GM12878 (cell line): ENCODE measurements at regions of chr7 and their contacts with region 1.

Region 1: GRCh38 chr7:137890449-137890921 is 43.7 kb upstream of the DGKI start:
- DNase-seq: no peak
- ATAC-seq: peak; percentile 4
- H3K4me3 ChIP-seq: no peak overlapping the region
- H3K27ac ChIP-seq: no peak overlapping the region
- H3K4me1 ChIP-seq: peaks cover 26% of the 10 kb centered on the region
- H3K27me3 ChIP-seq: no peaks in the 10 kb centered on the region
- CTCF ChIP-seq: no peak
- EP300 ChIP-seq: no peak
- POLR2A ChIP-seq: no peak
- RAD21 ChIP-seq: no peak

Region 2: GRCh38 chr7:137846827-137847567 is 43.5 kb before region 1 on chr7 and contains the start of gene DGKI:
- CTCF ChIA-PET with region 1: interaction called, 4 read pairs
- POLR2A ChIA-PET with region 1: interaction called, 3 read pairs
- RAD21 ChIA-PET with region 1: interaction called, 5 read pairs
- SMC1A ChIA-PET with region 1: interaction called, 10 read pairs
- in situ Hi-C with region 1: no loop called
- intact Hi-C with region 1: loop called (anchors 2 kb)
- DNase-seq: no peak
- ATAC-seq: peak; percentile 67
- H3K4me3 ChIP-seq: peak within 1 kb of the TSS; percentile 17; the same call in 1 of the 2 replicates
- H3K27ac ChIP-seq: no peak within 1 kb of the TSS
- H3K4me1 ChIP-seq: no peaks in the 10 kb centered on the region
- H3K27me3 ChIP-seq: peaks cover 1 to 14% of the 10 kb centered on the region in 2 experiments; a peak in 2 of 4 replicates
- CTCF ChIP-seq: no peak
- EP300 ChIP-seq: no peak
- POLR2A ChIP-seq: peak; percentile 51
- RAD21 ChIP-seq: no peak
- polyA plus RNA-seq, gene DGKI: 28.3 to 37.1 TPM

Region 3: DNA sequence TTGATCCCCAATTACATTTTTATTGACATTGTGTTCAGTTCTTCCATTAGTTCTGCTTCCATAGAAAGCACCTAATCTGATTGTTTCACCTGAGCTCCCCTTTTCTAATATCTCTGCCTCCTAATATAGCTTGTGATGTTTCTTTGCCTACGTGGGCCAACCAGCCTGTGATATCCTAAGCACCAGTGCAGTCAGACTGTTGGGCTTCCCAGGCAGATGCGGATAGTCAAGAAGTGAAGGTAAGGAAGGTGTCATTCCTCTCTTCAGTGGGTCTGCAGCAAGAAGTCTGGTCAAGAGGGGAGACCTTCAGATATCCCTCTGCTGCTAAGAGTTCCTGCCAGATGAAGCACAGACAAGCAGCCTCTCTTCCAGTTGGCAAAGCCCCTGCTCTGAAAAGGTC is 27.5 kb before region 1 on chr7:
- CTCF ChIA-PET with region 1: no interaction called
- POLR2A ChIA-PET with region 1: no interaction called
- RAD21 ChIA-PET with region 1: no interaction called
- SMC1A ChIA-PET with region 1: interaction called, 10 read pairs
- in situ Hi-C with region 1: no loop called
- intact Hi-C with region 1: no loop called
- DNase-seq: no peak
- ATAC-seq: no peak
- H3K4me3 ChIP-seq: no peak overlapping the region
- H3K27ac ChIP-seq: no peak overlapping the region
- H3K4me1 ChIP-seq: no peaks in the 10 kb centered on the region
- H3K27me3 ChIP-seq: no peaks in the 10 kb centered on the region
- CTCF ChIP-seq: no peak
- EP300 ChIP-seq: no peak
- POLR2A ChIP-seq: 0 out of 2 replicates have a peak, but pooled peaks have one; percentile 29
- RAD21 ChIP-seq: no peak

Region 4: DNA sequence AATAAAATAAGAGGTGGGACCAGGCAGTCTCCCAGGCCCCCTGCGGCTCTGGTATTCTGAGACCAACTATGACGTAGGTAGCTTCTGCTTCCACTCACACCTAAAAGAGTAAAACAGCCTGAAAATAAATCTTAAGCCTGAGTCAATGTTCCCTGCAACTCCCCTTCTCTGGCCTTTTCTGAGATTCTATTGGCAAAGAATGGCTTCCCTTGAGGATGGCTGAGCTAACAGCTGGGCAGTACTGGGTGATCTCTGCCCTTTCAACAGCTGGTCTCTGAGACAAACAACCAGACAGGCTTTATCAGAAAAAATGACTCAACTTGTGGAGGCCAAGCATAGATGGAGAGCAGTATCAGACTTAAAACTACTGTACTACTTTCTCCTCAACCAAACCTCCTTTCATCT is 52.7 kb after region 1 on chr7:
- CTCF ChIA-PET with region 1: no interaction called
- POLR2A ChIA-PET with region 1: no interaction called
- RAD21 ChIA-PET with region 1: no interaction called
- SMC1A ChIA-PET with region 1: no interaction called
- in situ Hi-C with region 1: no loop called
- intact Hi-C with region 1: no loop called
- DNase-seq: no peak
- ATAC-seq: no peak
- H3K4me3 ChIP-seq: no peak overlapping the region
- H3K27ac ChIP-seq: no peak overlapping the region
- H3K4me1 ChIP-seq: no peaks in the 10 kb centered on the region; the same call in 1 of the 2 replicates
- H3K27me3 ChIP-seq: no peaks in the 10 kb centered on the region
- CTCF ChIP-seq: no peak
- EP300 ChIP-seq: no peak
- POLR2A ChIP-seq: no peak
- RAD21 ChIP-seq: no peak

Region 5: GRCh38 chr7:137953665-137954470 is 63.4 kb after region 1 on chr7:
- CTCF ChIA-PET with region 1: no interaction called
- POLR2A ChIA-PET with region 1: no interaction called
- RAD21 ChIA-PET with region 1: no interaction called
- SMC1A ChIA-PET with region 1: no interaction called
- in situ Hi-C with region 1: no loop called
- intact Hi-C with region 1: no loop called
- DNase-seq: no peak
- ATAC-seq: peak; percentile 31; the same call in 2 of the 3 replicates
- H3K4me3 ChIP-seq: no peak overlapping the region
- H3K27ac ChIP-seq: no peak overlapping the region; the same call in 1 of the 2 replicates
- H3K4me1 ChIP-seq: peaks cover 14% of the 10 kb centered on the region
- H3K27me3 ChIP-seq: no peaks in the 10 kb centered on the region
- CTCF ChIP-seq: no peak
- EP300 ChIP-seq: no peak
- POLR2A ChIP-seq: no peak
- RAD21 ChIP-seq: no peak

Region 6: GRCh38 chr7:138089080-138089991 is 198.9 kb after region 1 on chr7:
- CTCF ChIA-PET with region 1: no interaction called
- POLR2A ChIA-PET with region 1: no interaction called
- RAD21 ChIA-PET with region 1: no interaction called
- SMC1A ChIA-PET with region 1: no interaction called
- in situ Hi-C with region 1: no loop called
- intact Hi-C with region 1: no loop called
- DNase-seq: no peak
- ATAC-seq: no peak
- H3K4me3 ChIP-seq: no peak overlapping the region
- H3K27ac ChIP-seq: no peak overlapping the region
- H3K4me1 ChIP-seq: peaks cover 6% of the 10 kb centered on the region
- H3K27me3 ChIP-seq: no peaks in the 10 kb centered on the region
- CTCF ChIP-seq: no peak
- EP300 ChIP-seq: no peak
- POLR2A ChIP-seq: no peak
- RAD21 ChIP-seq: no peak

Region 7: DNA sequence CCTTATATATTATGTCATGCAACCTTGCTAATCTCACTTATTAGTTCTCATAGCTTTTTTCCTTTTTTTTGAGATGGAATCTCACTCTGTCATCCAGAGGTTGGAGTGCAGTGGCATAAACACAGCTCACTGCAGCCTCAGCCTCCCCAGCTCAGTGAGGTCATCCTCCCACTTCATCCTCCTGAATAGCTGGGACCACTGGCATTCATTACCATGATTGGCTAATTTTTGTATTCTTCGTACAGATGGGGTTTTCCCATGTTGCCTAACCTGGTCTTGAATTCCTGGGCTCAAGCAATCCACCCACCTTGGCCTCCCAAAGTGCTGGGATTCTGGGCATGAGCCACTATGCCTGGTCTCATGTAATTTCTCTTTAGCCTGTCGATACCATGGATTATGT is 480.5 kb after region 1 on chr7:
- CTCF ChIA-PET with region 1: no interaction called
- POLR2A ChIA-PET with region 1: no interaction called
- RAD21 ChIA-PET with region 1: no interaction called
- SMC1A ChIA-PET with region 1: no interaction called
- in situ Hi-C with region 1: no loop called
- intact Hi-C with region 1: no loop called
- DNase-seq: no peak
- ATAC-seq: no peak
- H3K4me3 ChIP-seq: no peak overlapping the region
- H3K27ac ChIP-seq: no peak overlapping the region
- H3K4me1 ChIP-seq: no peaks in the 10 kb centered on the region
- H3K27me3 ChIP-seq: no peaks in the 10 kb centered on the region
- CTCF ChIP-seq: no peak
- EP300 ChIP-seq: no peak
- POLR2A ChIP-seq: no peak
- RAD21 ChIP-seq: no peak